B cell (primary cell): ENCODE measurements at regions of chr12 and their contacts with region 1.

Region 1: DNA sequence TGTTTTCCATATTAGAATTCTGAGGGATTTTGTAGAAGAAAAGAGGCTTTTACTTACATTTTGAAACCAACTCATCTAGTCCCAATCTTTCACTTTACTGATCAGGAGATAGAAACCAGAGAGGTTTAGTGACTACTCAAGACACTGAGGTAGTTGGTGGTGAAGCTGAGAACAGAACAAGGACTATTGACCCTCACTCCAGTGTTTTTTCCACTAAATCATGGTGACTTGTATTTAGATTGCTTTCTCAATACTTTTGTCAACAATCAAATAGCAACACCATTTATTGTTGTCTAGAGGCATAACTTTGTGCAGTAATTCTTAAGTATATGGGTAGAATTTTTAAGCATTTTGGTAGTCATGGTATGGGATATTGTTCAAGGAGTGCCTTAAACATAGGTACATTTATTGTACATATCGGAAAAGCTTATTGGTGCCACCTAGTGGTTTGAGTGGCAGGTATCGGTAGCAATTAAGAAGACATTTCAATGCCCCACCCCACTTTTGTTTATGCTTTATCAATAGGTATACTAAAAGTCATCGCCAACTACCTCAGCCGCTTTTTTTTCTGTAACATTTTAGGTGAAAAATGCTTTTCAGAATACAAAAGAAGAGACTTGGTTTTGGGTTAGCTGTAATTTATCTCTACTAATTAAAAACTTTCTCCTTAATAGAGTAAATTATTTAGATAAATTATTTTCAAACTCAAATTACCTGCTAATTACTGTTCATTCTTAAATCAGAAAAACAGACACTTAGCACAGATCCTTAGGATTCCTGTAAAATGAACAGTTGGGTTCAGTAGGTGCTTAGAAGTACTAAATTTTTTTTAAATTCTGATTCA is 47.3 kb upstream of the PAWR start:
- DNase-seq: peak; percentile 72
- ATAC-seq: peak; percentile 53
- H3K4me3 ChIP-seq: no peak overlapping the region
- H3K4me3 Mint-ChIP-seq: no peak overlapping the region
- H3K27ac ChIP-seq: no peak overlapping the region
- H3K27ac Mint-ChIP-seq: no peak overlapping the region
- H3K4me1 ChIP-seq: no peaks in the 10 kb centered on the region
- H3K4me1 Mint-ChIP-seq: no peaks in the 10 kb centered on the region
- H3K27me3 ChIP-seq: no peaks in the 10 kb centered on the region
- H3K27me3 Mint-ChIP-seq: peaks cover 8% of the 10 kb centered on the region
- CTCF ChIP-seq: peak; percentile 87

Region 2: GRCh38 chr12:79407671-79408622 is 330.1 kb before region 1 on chr12:
- CTCF ChIA-PET with region 1: interaction called, 11 read pairs
- POLR2A ChIA-PET with region 1: no interaction called
- intact Hi-C with region 1: loop called (anchors 1 kb)
- DNase-seq: peak; percentile 46
- ATAC-seq: peak; percentile 33
- H3K4me3 ChIP-seq: no peak overlapping the region
- H3K4me3 Mint-ChIP-seq: no peak overlapping the region
- H3K27ac ChIP-seq: no peak overlapping the region
- H3K27ac Mint-ChIP-seq: no peak overlapping the region
- H3K4me1 ChIP-seq: no peaks in the 10 kb centered on the region
- H3K4me1 Mint-ChIP-seq: no peaks in the 10 kb centered on the region
- H3K27me3 ChIP-seq: no peaks in the 10 kb centered on the region
- H3K27me3 Mint-ChIP-seq: no peaks in the 10 kb centered on the region
- CTCF ChIP-seq: peak; percentile 52

Region 3: GRCh38 chr12:79420146-79420618 is 317.9 kb before region 1 on chr12:
- CTCF ChIA-PET with region 1: interaction called, 4 read pairs
- POLR2A ChIA-PET with region 1: no interaction called
- intact Hi-C with region 1: loop called (anchors 1 kb)
- DNase-seq: no peak
- ATAC-seq: no peak
- H3K4me3 ChIP-seq: no peak overlapping the region
- H3K4me3 Mint-ChIP-seq: no peak overlapping the region
- H3K27ac ChIP-seq: no peak overlapping the region
- H3K27ac Mint-ChIP-seq: no peak overlapping the region
- H3K4me1 ChIP-seq: no peaks in the 10 kb centered on the region
- H3K4me1 Mint-ChIP-seq: no peaks in the 10 kb centered on the region
- H3K27me3 ChIP-seq: no peaks in the 10 kb centered on the region
- H3K27me3 Mint-ChIP-seq: no peaks in the 10 kb centered on the region
- CTCF ChIP-seq: no peak

Region 4: GRCh38 chr12:79547735-79548609 is 190.1 kb before region 1 on chr12:
- CTCF ChIA-PET with region 1: interaction called, 48 read pairs
- POLR2A ChIA-PET with region 1: no interaction called
- intact Hi-C with region 1: no loop called
- DNase-seq: peak; percentile 50
- ATAC-seq: peak; percentile 43
- H3K4me3 ChIP-seq: no peak overlapping the region
- H3K4me3 Mint-ChIP-seq: no peak overlapping the region
- H3K27ac ChIP-seq: no peak overlapping the region
- H3K27ac Mint-ChIP-seq: no peak overlapping the region
- H3K4me1 ChIP-seq: no peaks in the 10 kb centered on the region
- H3K4me1 Mint-ChIP-seq: no peaks in the 10 kb centered on the region
- H3K27me3 ChIP-seq: no peaks in the 10 kb centered on the region
- H3K27me3 Mint-ChIP-seq: no peaks in the 10 kb centered on the region
- CTCF ChIP-seq: peak; percentile 72